ENCODE measurements at regions of chr22 and their contacts with region 1.

Region 1: GRCh38 chr22:21972293-21972779 is 10.3 kb downstream of the TOP3B start:
- DNase-seq: peak; percentile 54
- H3K4me3 Mint-ChIP-seq: no peak overlapping the region
- H3K27ac Mint-ChIP-seq: no peak overlapping the region
- H3K4me1 Mint-ChIP-seq: no peaks in the 10 kb centered on the region
- H3K27me3 Mint-ChIP-seq: no peaks in the 10 kb centered on the region

Region 2: GRCh38 chr22:21982338-21982965 is 10.1 kb after region 1 on chr22 and contains the start of gene TOP3B:
- CTCF ChIA-PET with region 1: interaction called, 38 read pairs
- POLR2A ChIA-PET with region 1: interaction called, 14 read pairs
- DNase-seq: peak; percentile 85
- H3K4me3 Mint-ChIP-seq: peak within 1 kb of the TSS; percentile 87
- H3K27ac Mint-ChIP-seq: peak within 1 kb of the TSS; percentile 72
- H3K4me1 Mint-ChIP-seq: peaks cover 29% of the 10 kb centered on the region
- H3K27me3 Mint-ChIP-seq: no peaks in the 10 kb centered on the region
- total RNA-seq, gene TOP3B: 42.6 to 42.7 TPM

Measured in activated CD4-positive, alpha-beta memory T cell treated with anti-CD3 and anti-CD28 coated beads, Interleukin-2, amount 10 ng/mL, durations not matched to agents 7 days and 5 days (primary cell).